ENCODE measurements at regions of chr12 and their contacts with region 1.

Region 1: GRCh38 chr12:85575120-85576096 is 260.8 kb downstream of the RASSF9 start:
- DNase-seq: peak; percentile 64
- H3K4me3 Mint-ChIP-seq: no peak overlapping the region
- H3K27ac Mint-ChIP-seq: no peak overlapping the region
- H3K4me1 Mint-ChIP-seq: peaks cover 8% of the 10 kb centered on the region
- H3K27me3 Mint-ChIP-seq: no peaks in the 10 kb centered on the region
- CTCF ChIP-seq: peak; percentile 71

Region 2: GRCh38 chr12:85476756-85477155 is 98.7 kb before region 1 on chr12:
- CTCF ChIA-PET with region 1: no interaction called
- intact Hi-C with region 1: loop called (anchors 2 kb)
- DNase-seq: no peak
- H3K4me3 Mint-ChIP-seq: no peak overlapping the region
- H3K27ac Mint-ChIP-seq: no peak overlapping the region
- H3K4me1 Mint-ChIP-seq: peaks cover under 1% of the 10 kb centered on the region
- H3K27me3 Mint-ChIP-seq: no peaks in the 10 kb centered on the region
- CTCF ChIP-seq: no peak

Region 3: GRCh38 chr12:85781766-85782165 is 206.4 kb after region 1 on chr12:
- CTCF ChIA-PET with region 1: interaction called, 3 read pairs
- intact Hi-C with region 1: loop called (anchors 1 kb)
- DNase-seq: no peak
- H3K4me3 Mint-ChIP-seq: no peak overlapping the region
- H3K27ac Mint-ChIP-seq: no peak overlapping the region
- H3K4me1 Mint-ChIP-seq: peaks cover 28% of the 10 kb centered on the region
- H3K27me3 Mint-ChIP-seq: no peaks in the 10 kb centered on the region
- CTCF ChIP-seq: no peak

Region 4: DNA sequence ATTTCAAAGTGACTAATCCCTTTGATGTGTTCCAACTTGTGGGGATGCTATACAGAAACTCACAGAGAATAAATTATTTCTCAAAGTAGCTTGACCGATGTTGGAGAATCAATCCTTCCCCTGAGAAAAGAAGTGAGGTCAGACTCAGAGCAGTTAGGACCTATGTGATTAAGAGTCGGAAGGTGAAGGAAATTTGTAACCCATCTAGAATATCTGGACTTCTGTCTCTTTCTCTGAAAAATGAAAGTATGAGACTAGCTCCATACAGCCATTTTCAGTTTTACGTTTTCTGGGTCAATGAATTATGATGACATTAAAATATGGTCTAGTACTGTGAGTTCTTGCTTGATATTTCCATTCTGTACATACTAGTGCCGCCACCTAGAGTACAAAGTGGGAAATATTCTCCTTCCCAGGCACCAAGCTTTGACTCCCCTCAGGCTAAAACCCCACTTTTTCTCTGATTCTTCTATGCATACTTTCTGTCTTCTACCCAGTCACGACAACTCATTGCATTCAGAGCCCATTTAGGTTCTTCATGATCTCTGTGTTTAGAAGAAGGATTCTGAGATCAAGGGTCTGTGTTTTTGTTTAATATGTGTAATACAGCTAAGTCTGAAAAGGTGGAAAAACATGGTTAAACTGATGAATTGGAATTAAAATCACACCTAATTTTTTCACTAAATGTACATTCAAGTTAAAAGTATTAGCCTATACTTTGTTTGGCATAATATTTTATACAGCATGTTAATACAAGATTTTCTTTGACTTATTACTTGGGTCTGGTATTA is 291.8 kb after region 1 on chr12:
- CTCF ChIA-PET with region 1: interaction called, 55 read pairs
- intact Hi-C with region 1: loop called (anchors 1 kb)
- DNase-seq: peak; percentile 63
- H3K4me3 Mint-ChIP-seq: no peak overlapping the region
- H3K27ac Mint-ChIP-seq: no peak overlapping the region
- H3K4me1 Mint-ChIP-seq: peaks cover 42% of the 10 kb centered on the region
- H3K27me3 Mint-ChIP-seq: no peaks in the 10 kb centered on the region
- CTCF ChIP-seq: peak; percentile 87

Region 5: GRCh38 chr12:85920324-85920947 is 345.0 kb after region 1 on chr12:
- CTCF ChIA-PET with region 1: interaction called, 5 read pairs
- intact Hi-C with region 1: loop called (anchors 1 kb)
- DNase-seq: no peak
- H3K4me3 Mint-ChIP-seq: no peak overlapping the region
- H3K27ac Mint-ChIP-seq: no peak overlapping the region
- H3K4me1 Mint-ChIP-seq: no peaks in the 10 kb centered on the region
- H3K27me3 Mint-ChIP-seq: no peaks in the 10 kb centered on the region
- CTCF ChIP-seq: peak; percentile 45